ENCODE measurements at regions of chr10 and their contacts with region 1.

Region 1: DNA sequence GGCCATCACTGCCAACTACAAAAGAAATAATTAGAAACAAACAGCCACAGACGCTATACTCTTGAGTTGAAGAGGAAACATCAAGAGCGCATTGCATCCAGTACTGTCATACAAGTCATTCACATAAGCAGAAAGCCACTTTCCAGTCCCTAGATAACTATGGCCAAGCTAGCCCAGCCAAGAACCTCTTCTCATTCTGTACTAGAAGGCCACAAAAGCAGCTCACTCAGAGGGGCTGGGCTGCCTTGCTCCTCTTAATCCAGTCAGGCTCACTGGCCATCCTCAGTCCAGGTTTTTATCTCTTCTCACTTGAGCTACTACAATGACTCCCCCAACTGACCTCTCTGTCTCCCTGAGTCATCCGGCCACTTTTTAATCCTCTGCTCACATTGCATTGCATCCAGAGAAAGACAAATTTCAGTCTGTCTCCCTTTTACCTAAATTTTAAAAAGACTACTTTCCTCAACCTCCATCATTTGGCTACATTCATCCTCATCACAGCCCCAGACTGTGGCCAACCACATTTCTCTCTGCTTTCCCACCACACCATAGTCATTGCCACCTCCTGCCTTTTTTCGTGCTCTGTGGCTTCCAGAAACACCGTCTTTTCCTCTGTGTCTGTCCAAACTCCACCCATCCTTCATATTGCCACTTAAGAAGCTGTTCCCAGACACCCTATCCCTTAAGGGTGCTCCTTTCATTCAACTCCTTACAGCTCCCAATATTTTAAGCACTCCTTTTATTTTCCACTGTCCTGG is 25.0 kb downstream of the PPP1R3C start:
- DNase-seq: no peak
- ATAC-seq: peak; percentile 76

Region 2: DNA sequence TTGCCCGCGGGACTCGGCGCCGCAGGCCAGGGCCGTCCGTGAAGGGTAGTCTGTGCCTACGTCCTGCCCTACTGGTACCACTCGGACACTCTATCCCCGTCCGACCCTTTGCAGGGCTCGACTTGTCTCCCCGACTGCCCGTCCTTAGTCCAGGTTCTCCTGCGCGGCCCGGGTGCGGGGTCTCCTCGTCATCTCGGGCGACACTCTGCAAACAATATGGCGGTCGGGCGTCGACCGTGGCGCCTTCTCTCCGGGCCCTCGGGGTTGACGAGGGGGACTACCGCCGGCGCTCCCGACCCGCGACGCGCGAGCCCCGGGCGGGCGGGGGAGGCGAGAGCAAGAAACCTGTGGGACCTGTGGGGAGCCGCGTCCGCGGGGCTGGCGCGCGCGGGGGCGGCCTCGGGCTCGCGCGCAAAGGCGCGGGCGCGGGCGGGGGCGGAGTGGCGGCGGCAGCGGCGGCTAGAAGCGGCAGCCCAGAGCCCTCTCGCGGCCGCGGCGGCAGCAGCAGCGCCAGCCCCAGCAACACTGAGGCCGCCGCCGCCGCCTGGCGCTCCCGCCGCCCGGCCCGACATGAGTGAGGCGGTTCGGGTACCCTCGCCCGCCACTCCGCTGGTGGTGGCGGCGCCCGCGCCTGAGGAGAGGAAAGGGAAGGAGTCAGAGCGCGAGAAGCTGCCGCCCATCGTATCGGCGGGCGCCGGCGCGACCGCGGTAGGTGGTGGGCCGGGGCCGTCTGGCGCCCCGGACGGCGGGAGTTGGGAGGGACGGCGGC is 197.8 kb before region 1 on chr10 and contains the start of gene HECTD2:
- intact Hi-C with region 1: no loop called
- DNase-seq: peak; percentile 86
- ATAC-seq: peak; percentile 82
- total RNA-seq, gene HECTD2: 2.5 TPM

Region 3: GRCh38 chr10:91590142-91590903 is 17.5 kb before region 1 on chr10:
- intact Hi-C with region 1: loop called (anchors 2 kb)
- DNase-seq: no peak
- ATAC-seq: no peak